ENCODE measurements at regions of chr5 and their contacts with region 1.

Region 1: GRCh38 chr5:89187883-89188465 is 305.0 kb upstream of the MEF2C start:
- DNase-seq: no peak
- H3K4me3 ChIP-seq: no peak overlapping the region
- H3K27ac ChIP-seq: no peak overlapping the region
- H3K4me1 ChIP-seq: peaks cover 0 to 15% (median 4%) of the 10 kb centered on the region in 4 donors
- H3K27me3 ChIP-seq: no peaks in the 10 kb centered on the region
- CTCF ChIP-seq: no peak

Region 2: DNA sequence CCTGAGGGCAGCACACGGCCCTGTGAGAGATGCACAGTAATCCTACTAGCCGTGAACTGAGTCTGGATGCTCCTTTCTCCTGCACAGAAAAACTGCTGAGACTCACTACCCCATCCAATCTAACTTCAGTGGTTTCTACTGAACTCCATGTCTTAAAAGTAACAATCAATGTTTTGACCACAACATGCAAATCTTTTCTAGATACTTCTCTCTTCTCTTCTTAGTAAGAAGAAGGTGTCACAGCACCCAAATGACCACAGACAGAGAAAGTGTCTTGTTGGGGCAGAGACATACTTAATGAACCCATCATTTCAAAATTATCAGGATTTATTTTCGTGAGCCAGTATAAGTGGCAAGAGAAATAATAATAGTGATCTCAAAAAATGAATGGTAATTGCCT is 19.2 kb before region 1 on chr5:
- intact Hi-C with region 1: loop called (anchors 1 kb)
- DNase-seq: no peak
- H3K4me3 ChIP-seq: no peak overlapping the region
- H3K27ac ChIP-seq: no peak overlapping the region
- H3K4me1 ChIP-seq: no peaks in the 10 kb centered on the region
- H3K27me3 ChIP-seq: no peaks in the 10 kb centered on the region
- CTCF ChIP-seq: no peak

Region 3: GRCh38 chr5:89883967-89884366 is 696.0 kb after region 1 on chr5:
- intact Hi-C with region 1: no loop called
- DNase-seq: no peak
- H3K4me3 ChIP-seq: no peak overlapping the region
- H3K27ac ChIP-seq: no peak overlapping the region
- H3K4me1 ChIP-seq: no peaks in the 10 kb centered on the region
- H3K27me3 ChIP-seq: no peaks in the 10 kb centered on the region
- CTCF ChIP-seq: no peak

Region 4: GRCh38 chr5:90932052-90932699 is 1744.2 kb after region 1 on chr5:
- intact Hi-C with region 1: no loop called
- DNase-seq: peak in 1 of 2 donors; percentile 22
- H3K4me3 ChIP-seq: no peak overlapping the region
- H3K27ac ChIP-seq: no peak overlapping the region
- H3K4me1 ChIP-seq: peaks cover 0 to 9% (median 3%) of the 10 kb centered on the region in 4 donors
- H3K27me3 ChIP-seq: no peaks in the 10 kb centered on the region
- CTCF ChIP-seq: peak; percentile 73 to 76